Right ventricle myocardium inferior (tissue), 1 donor: ENCODE measurements at regions of chr17 and their contacts with region 1.

Region 1: DNA sequence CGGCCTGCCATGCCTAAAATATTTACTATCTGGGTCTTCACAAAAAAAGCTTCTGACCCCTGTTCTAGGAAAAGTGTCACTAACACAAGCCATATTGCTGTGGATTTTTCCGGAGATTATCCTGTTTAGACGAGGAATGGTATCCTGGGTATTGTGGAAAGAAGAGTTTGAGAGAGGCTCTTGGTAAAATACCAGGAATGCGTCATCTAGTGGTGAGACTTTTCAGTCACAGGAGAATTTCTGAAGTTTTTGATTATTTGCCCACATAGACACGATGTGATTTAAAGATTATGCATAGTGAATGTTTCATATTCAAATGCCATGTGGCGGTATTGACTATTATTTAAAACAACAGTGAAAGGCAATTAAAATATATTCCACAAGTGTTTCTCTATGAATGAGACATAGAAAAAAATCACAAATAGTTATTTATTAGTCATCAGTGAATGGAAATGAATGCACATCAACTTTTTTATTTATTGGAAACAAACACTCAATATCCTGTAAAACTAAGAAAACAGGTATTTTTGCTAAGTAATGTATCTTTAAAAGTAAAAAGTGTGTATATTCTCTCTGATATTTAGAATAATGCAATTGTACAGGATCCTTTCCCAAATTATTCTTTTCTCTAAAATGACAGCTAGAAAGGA is 7.8 kb downstream of the KRT28 start:
- DNase-seq: no peak
- ATAC-seq: peak; percentile 73

Region 2: DNA sequence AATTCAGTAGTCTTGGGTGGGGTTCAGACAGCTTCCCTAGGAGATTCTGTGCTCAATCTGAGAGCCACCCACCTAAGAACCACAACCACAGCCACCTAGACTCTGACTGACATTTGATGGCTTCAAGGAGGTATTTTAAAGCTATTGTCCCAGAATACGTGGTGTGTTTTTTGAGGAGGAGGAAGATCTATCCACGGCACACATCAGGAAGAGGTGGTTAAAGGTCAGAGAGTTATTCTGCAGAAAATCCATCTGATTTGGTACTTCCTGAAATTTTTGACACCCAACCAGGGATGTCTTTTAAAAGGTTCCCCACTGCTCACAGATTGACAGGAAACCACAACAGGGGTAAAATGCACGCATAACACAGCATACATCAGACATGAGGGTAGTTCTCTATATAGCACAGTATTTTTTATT is 169.4 kb before region 1 on chr17:
- intact Hi-C with region 1: loop called (anchors 5 kb)
- DNase-seq: no peak
- ATAC-seq: no peak

Region 3: DNA sequence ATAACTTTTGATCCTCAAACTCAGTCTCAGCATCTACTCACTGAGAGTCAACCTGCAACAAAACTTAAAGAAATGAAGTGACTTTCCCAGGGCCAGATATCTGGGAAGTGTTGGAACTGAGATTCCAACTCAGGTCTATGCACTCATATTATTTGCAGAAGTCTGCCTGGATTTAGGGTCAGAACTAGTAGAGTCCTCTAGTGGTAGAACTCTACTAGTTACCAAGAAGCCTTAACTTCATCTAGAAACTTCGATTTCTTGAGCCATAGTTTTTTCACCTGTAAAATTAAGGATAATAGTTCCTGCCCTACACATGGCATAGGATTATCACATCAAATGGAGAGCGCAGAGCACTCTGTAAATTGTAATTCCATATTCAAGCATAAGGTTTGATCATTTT is 65.0 kb before region 1 on chr17:
- intact Hi-C with region 1: no loop called
- DNase-seq: no peak
- ATAC-seq: no peak

Region 4: DNA sequence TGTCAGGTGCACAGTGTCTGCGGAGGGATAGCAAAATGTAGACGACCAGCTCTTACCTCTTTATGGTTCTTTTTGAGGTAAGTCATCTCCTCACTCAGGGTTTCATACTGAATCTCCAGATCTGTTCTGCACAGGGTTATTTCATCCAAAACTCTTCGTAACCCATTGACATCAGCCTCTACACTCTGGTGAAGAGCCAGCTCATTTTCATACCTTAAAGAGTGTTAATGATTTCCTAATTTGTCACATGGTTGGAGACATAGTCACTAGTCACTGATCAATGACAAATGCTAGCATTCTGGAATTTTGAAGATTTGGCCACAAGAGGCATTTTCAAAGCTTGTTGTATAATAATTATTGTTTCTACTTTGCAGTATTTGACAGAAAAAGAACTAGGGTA is 38.1 kb before region 1 on chr17:
- intact Hi-C with region 1: no loop called
- DNase-seq: no peak
- ATAC-seq: no peak

Region 5: GRCh38 chr17:40932608-40933007 is 140.7 kb after region 1 on chr17:
- intact Hi-C with region 1: no loop called
- DNase-seq: no peak
- ATAC-seq: no peak